Common myeloid progenitor, CD34-positive (primary cell): ENCODE measurements at regions of chr2 and their contacts with region 1.

Region 1: GRCh38 chr2:7044261-7045250 is 127.3 kb downstream of the RNF144A start:
- DNase-seq: peak; percentile 43 to 71 (median 58)
- H3K4me3 ChIP-seq: no peak overlapping the region
- H3K27ac ChIP-seq: no peak overlapping the region
- H3K4me1 ChIP-seq: peaks cover 3 to 47% (median 29%) of the 10 kb centered on the region in 4 experiments
- H3K27me3 ChIP-seq: no peaks in the 10 kb centered on the region

Region 2: GRCh38 chr2:7034316-7034715 is 10.2 kb before region 1 on chr2:
- CTCF ChIA-PET with region 1: interaction called, 31 read pairs
- POLR2A ChIA-PET with region 1: no interaction called
- DNase-seq: no peak
- H3K4me3 ChIP-seq: no peak overlapping the region
- H3K27ac ChIP-seq: no peak overlapping the region
- H3K4me1 ChIP-seq: peaks cover 0 to 22% (median 5%) of the 10 kb centered on the region in 4 experiments
- H3K27me3 ChIP-seq: no peaks in the 10 kb centered on the region

Region 3: GRCh38 chr2:7057865-7058400 is 13.4 kb after region 1 on chr2:
- CTCF ChIA-PET with region 1: interaction called, 18 read pairs
- POLR2A ChIA-PET with region 1: no interaction called
- DNase-seq: peak; percentile 25 to 80 (median 69)
- H3K4me3 ChIP-seq: peak overlapping the region in 1 of 7 experiments; percentile 1
- H3K27ac ChIP-seq: peak overlapping the region in 1 of 2 experiments; percentile 57
- H3K4me1 ChIP-seq: peaks cover 11 to 36% (median 32%) of the 10 kb centered on the region in 4 experiments
- H3K27me3 ChIP-seq: no peaks in the 10 kb centered on the region